Ovary (tissue), 10 donors: ENCODE measurements at regions of chr1 and their contacts with region 1.

Region 1: DNA sequence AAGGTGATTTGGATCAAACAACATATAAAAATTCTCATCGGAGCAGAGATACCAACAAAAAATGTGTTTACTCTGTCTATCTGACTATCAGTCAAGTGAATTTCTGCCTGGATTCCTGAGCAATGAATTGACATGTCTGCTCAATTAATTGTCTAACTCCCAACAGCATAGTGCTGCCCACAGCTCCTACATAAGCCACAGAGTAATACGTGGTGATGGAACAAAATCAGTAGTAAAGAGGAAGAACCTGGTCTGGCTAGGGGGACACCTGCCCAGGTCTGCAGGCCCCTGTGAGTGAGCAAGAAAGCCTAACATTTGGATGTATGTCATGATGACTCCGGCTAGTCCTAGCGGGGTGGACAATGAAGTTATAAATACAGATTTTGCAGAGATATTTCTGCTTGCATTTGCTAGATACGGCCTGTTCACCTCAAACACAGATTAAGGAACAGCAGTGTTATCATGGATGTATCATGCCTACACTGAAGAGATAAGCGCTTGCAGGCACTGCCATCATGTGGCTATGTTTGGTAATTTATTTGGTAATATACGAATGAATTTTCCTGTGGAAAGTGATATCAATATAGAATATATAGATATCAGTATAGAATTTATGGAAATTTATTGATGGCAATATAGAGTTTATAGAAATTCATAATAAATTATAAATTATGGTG is 69.6 kb upstream of the LRRC8B start:
- DNase-seq: peak in 4 of 5 donors; percentile 20 to 38 (median 31)
- H3K4me3 ChIP-seq: no peak overlapping the region
- H3K27ac ChIP-seq: no peak overlapping the region
- H3K4me1 ChIP-seq: no peaks in the 10 kb centered on the region
- H3K27me3 ChIP-seq: no peaks in the 10 kb centered on the region
- CTCF ChIP-seq: peak; percentile 20 to 67 (median 46)
- EP300 ChIP-seq: no peak
- POLR2A ChIP-seq: no peak

Region 2: DNA sequence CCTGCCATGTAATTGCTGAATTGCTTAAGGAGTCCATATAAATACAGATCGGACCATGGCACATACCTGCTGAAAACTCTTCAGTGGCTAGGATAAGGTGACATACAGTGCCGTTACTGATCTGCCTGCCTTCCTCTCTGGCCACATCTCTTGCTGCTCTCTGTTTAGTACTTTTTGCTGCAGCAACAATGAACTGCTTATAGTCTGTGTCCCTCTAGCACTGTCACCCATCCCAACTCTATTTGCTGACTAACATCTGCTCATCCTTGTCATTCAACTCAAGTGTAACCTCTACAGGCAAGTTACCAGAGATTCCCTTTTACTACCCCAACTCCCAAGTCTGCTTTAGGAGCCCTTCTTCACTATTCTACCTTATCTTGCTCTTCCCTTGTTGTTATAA is 629.3 kb before region 1 on chr1:
- intact Hi-C with region 1: no loop called
- DNase-seq: no peak
- H3K4me3 ChIP-seq: no peak overlapping the region
- H3K27ac ChIP-seq: no peak overlapping the region
- H3K4me1 ChIP-seq: no peaks in the 10 kb centered on the region
- H3K27me3 ChIP-seq: no peaks in the 10 kb centered on the region
- CTCF ChIP-seq: no peak
- EP300 ChIP-seq: no peak
- POLR2A ChIP-seq: no peak

Region 3: GRCh38 chr1:88973520-88974137 is 481.4 kb before region 1 on chr1:
- intact Hi-C with region 1: loop called in 1 of 4 experiments (anchors 10 kb)
- DNase-seq: no peak
- H3K4me3 ChIP-seq: no peak overlapping the region
- H3K27ac ChIP-seq: no peak overlapping the region
- H3K4me1 ChIP-seq: no peaks in the 10 kb centered on the region
- H3K27me3 ChIP-seq: no peaks in the 10 kb centered on the region
- CTCF ChIP-seq: peak in 2 of 3 donors; percentile 12 to 40
- EP300 ChIP-seq: no peak
- POLR2A ChIP-seq: no peak